Panc1 (cell line): ENCODE measurements at regions of chr19 and their contacts with region 1.

Region 1: GRCh38 chr19:48333467-48334384 is 8.4 kb downstream of the EMP3 start:
- DNase-seq: no peak
- ATAC-seq: peak; percentile 90
- H3K4me3 ChIP-seq: peak overlapping the region; percentile 42 to 66
- H3K27ac ChIP-seq: peak overlapping the region; percentile 71
- H3K4me1 ChIP-seq: peaks cover 7% of the 10 kb centered on the region
- H3K27me3 ChIP-seq: no peaks in the 10 kb centered on the region
- CTCF ChIP-seq: peak; percentile 88

Region 2: DNA sequence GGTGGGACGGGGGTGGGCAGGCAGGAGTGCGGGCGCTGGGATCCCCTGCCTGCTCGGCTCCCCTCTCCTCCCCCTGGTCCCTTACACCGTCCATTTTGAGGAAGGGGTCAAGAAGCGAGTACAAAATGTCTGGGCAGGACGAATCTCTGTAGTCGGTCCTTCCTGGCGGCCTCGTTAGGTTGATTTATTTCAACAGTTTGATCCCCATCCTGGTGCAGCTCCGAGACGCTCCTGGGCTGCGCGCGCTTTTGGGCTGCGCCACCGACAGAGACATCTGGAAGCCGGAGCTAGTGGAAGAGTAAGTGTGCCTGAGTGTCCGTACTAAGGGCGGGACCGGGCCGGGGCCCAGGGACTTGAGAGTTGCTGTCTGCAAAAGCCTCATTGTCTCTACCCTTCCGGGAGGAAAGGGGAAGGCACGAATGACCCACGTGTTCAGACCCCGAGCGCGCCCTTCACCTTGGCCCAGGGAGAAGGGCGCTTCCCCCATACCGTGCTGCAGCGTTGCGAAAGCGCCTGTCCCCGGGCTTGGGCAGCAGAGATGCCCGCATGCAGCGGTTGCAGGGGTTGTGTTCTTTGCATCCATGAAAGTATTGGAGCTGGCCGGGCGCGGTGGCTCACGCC is 62.1 kb before region 1 on chr19:
- CTCF ChIA-PET with region 1: interaction called, 18 read pairs
- POLR2A ChIA-PET with region 1: no interaction called
- in situ Hi-C with region 1: no loop called
- intact Hi-C with region 1: no loop called
- DNase-seq: no peak
- ATAC-seq: peak; percentile 87
- H3K4me3 ChIP-seq: peak overlapping the region; percentile 50 to 75
- H3K27ac ChIP-seq: peak overlapping the region; percentile 69
- H3K4me1 ChIP-seq: no peaks in the 10 kb centered on the region
- H3K27me3 ChIP-seq: no peaks in the 10 kb centered on the region
- CTCF ChIP-seq: no peak

Region 3: GRCh38 chr19:48321622-48322591 is 11.8 kb before region 1 on chr19:
- CTCF ChIA-PET with region 1: interaction called, 20 read pairs
- POLR2A ChIA-PET with region 1: interaction called, 5 read pairs
- in situ Hi-C with region 1: no loop called
- intact Hi-C with region 1: no loop called
- DNase-seq: no peak
- ATAC-seq: peak; percentile 73
- H3K4me3 ChIP-seq: peak overlapping the region; percentile 54 to 67
- H3K27ac ChIP-seq: peak overlapping the region; percentile 96
- H3K4me1 ChIP-seq: peaks cover 14% of the 10 kb centered on the region
- H3K27me3 ChIP-seq: no peaks in the 10 kb centered on the region
- CTCF ChIP-seq: no peak

Region 4: DNA sequence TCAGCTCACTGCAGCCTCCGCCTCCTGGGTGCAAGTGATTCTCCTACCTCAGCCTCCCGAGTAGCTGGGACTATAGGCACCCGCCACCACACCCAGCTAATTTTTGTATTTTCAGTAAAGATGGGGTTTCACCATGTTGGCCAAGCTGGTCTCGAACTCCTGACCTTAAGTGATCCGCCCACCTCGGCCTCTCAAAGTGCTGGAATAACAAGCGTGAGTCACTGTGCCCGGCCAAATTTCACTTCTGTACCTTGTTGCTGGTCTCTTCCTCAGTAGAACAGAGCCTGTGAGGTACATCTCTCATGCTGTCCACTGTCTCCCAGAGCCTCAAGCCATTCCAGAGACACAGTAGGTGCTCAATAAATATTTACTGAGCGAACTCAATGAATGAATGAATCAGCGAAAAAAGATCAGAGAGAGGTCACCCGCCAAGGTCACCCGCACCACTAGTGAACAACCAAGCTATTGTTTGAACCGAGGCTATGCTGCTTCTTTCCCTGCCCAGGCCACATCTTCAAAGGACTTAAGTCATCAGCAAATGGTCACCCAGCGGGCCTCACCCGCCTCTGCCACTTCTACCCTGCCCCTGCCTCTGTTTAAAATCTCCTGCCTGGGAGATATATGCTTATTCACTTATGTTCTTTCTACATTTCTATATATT is 20.7 kb after region 1 on chr19:
- CTCF ChIA-PET with region 1: interaction called, 18 read pairs
- POLR2A ChIA-PET with region 1: no interaction called
- in situ Hi-C with region 1: no loop called
- intact Hi-C with region 1: no loop called
- DNase-seq: peak; percentile 61
- ATAC-seq: peak; percentile 89
- H3K4me3 ChIP-seq: no peak overlapping the region
- H3K27ac ChIP-seq: no peak overlapping the region
- H3K4me1 ChIP-seq: peaks cover 3% of the 10 kb centered on the region
- H3K27me3 ChIP-seq: no peaks in the 10 kb centered on the region
- CTCF ChIP-seq: no peak

Region 5: GRCh38 chr19:48391107-48391986 is 57.6 kb after region 1 on chr19 and contains the start of gene KDELR1:
- CTCF ChIA-PET with region 1: no interaction called
- POLR2A ChIA-PET with region 1: no interaction called
- in situ Hi-C with region 1: no loop called
- intact Hi-C with region 1: no loop called
- DNase-seq: no peak
- ATAC-seq: peak; percentile 70
- H3K4me3 ChIP-seq: peak within 1 kb of the TSS; percentile 86 to 87
- H3K27ac ChIP-seq: peak within 1 kb of the TSS; percentile 88
- H3K4me1 ChIP-seq: peaks cover 19% of the 10 kb centered on the region
- H3K27me3 ChIP-seq: no peaks in the 10 kb centered on the region
- CTCF ChIP-seq: peak; percentile 92
- total RNA-seq, gene KDELR1: 111 TPM

Region 6: GRCh38 chr19:48755084-48755641 is 421.4 kb after region 1 on chr19 and contains the start of gene FGF21:
- CTCF ChIA-PET with region 1: no interaction called
- POLR2A ChIA-PET with region 1: interaction called, 12 read pairs
- in situ Hi-C with region 1: no loop called
- intact Hi-C with region 1: no loop called
- DNase-seq: no peak
- ATAC-seq: no peak
- H3K4me3 ChIP-seq: no peak within 1 kb of the TSS
- H3K27ac ChIP-seq: peak within 1 kb of the TSS; percentile 9; the same call in 1 of the 2 replicates
- H3K4me1 ChIP-seq: no peaks in the 10 kb centered on the region; the same call in 1 of the 2 replicates
- H3K27me3 ChIP-seq: no peaks in the 10 kb centered on the region
- CTCF ChIP-seq: no peak
- total RNA-seq, gene FGF21: not detected